A549 (cell line): ENCODE measurements at regions of chr3 and their contacts with region 1.

Region 1: DNA sequence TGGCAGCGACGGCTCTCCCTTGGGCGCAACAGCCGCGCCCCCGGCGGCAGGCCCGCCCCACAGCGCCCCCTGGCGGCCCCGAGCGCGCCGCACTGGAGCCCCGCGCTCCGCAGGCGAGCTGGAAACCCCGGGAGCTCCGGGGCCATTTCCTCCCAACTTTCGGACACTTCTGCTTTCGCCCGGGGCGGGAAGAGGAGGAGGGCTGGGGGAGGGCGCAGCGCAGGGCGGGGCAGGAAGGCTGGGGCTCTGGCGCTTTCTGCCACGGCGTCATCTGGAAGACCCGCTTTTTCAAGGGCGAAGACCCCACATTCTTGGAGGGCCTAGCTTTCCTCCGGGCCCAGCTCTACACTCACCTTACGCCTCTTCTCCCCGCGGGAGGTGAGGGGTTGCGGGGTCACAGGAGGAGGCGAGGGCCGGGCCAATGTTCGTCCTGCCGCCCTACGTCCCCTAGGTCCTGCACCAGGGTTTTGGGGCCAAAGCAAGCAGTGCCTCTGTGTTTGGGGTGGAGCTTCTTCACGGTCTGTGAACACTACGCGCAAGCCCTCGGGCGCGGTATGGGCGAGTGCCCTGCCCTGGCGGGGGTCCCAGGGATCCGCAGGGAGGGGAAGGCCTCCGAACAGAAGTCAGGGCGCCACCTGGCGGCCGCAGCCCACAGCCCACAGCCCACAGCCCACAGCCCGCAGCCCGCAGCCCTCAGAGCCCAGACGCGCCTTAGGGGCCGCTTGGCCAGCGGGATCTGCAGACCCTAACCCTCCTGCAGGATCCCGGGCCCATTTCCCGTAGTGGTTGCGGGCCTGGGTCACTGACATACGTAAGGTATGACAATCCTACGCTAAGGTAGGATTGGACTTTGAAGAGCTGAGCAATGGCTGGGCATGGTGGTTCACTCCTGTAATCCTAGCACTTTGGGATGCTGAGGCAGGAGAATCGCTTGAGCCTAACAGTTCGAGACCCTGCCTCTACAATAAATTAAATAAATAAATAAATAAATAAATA is 31.1 kb downstream of the FOXL2 start:
- DNase-seq: peak; percentile 79 to 82
- ATAC-seq: peak; percentile 94 to 96
- H3K4me3 ChIP-seq: peak overlapping the region; percentile 76
- H3K27ac ChIP-seq: peak overlapping the region; percentile 95 to 97
- H3K4me1 ChIP-seq: peaks cover 5% of the 10 kb centered on the region; the same call in 1 of the 3 replicates
- CTCF ChIP-seq: peak; percentile 70
- EP300 ChIP-seq: no peak
- POLR2A ChIP-seq: peak; percentile 18; the same call in 1 of the 2 replicates
- RAD21 ChIP-seq: peak; percentile 69 to 77

Region 2: DNA sequence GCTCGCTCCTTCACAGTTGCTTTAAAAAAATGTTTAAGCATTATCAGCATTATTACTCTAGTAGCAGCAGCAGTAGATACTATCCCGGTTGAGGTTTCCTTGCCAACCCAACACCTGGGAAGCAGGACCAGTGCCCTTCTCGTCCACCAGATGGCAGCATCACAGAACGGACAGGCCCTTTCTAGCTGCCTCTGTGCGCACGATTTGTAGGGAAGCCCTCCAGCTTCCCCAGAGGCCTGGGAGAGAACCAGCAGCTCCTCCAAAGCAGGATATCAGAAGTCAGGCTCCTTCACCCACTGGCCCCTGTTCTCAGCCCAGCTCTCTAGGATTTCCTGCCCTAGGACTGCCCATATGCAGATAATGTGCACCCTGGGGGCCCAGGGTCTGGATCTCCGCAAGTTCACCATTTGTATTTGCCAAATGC is 498.2 kb before region 1 on chr3:
- CTCF ChIA-PET with region 1: interaction called, 65 read pairs
- POLR2A ChIA-PET with region 1: no interaction called
- DNase-seq: peak; percentile 70 to 79
- ATAC-seq: peak; percentile 97 to 99
- H3K4me3 ChIP-seq: no peak overlapping the region
- H3K27ac ChIP-seq: no peak overlapping the region
- H3K4me1 ChIP-seq: no peaks in the 10 kb centered on the region
- CTCF ChIP-seq: peak; percentile 73
- EP300 ChIP-seq: no peak
- POLR2A ChIP-seq: no peak
- RAD21 ChIP-seq: peak; percentile 77 to 80

Region 3: GRCh38 chr3:138498991-138499390 is 416.8 kb before region 1 on chr3:
- CTCF ChIA-PET with region 1: no interaction called
- POLR2A ChIA-PET with region 1: no interaction called
- DNase-seq: no peak
- ATAC-seq: no peak
- H3K4me3 ChIP-seq: no peak overlapping the region
- H3K27ac ChIP-seq: no peak overlapping the region
- H3K4me1 ChIP-seq: peaks cover 29% of the 10 kb centered on the region
- CTCF ChIP-seq: no peak
- EP300 ChIP-seq: no peak
- POLR2A ChIP-seq: no peak
- RAD21 ChIP-seq: no peak

Region 4: GRCh38 chr3:138668107-138668506 is 247.7 kb before region 1 on chr3:
- CTCF ChIA-PET with region 1: interaction called, 12 read pairs
- POLR2A ChIA-PET with region 1: no interaction called
- DNase-seq: no peak
- ATAC-seq: no peak
- H3K4me3 ChIP-seq: no peak overlapping the region
- H3K27ac ChIP-seq: no peak overlapping the region
- H3K4me1 ChIP-seq: no peaks in the 10 kb centered on the region
- CTCF ChIP-seq: no peak
- EP300 ChIP-seq: no peak
- POLR2A ChIP-seq: no peak
- RAD21 ChIP-seq: no peak

Region 5: GRCh38 chr3:138717348-138717747 is 198.5 kb before region 1 on chr3:
- CTCF ChIA-PET with region 1: interaction called, 12 read pairs
- POLR2A ChIA-PET with region 1: no interaction called
- DNase-seq: no peak
- ATAC-seq: no peak
- H3K4me3 ChIP-seq: no peak overlapping the region
- H3K27ac ChIP-seq: no peak overlapping the region
- H3K4me1 ChIP-seq: no peaks in the 10 kb centered on the region
- CTCF ChIP-seq: no peak
- EP300 ChIP-seq: no peak
- POLR2A ChIP-seq: no peak
- RAD21 ChIP-seq: no peak

Region 6: DNA sequence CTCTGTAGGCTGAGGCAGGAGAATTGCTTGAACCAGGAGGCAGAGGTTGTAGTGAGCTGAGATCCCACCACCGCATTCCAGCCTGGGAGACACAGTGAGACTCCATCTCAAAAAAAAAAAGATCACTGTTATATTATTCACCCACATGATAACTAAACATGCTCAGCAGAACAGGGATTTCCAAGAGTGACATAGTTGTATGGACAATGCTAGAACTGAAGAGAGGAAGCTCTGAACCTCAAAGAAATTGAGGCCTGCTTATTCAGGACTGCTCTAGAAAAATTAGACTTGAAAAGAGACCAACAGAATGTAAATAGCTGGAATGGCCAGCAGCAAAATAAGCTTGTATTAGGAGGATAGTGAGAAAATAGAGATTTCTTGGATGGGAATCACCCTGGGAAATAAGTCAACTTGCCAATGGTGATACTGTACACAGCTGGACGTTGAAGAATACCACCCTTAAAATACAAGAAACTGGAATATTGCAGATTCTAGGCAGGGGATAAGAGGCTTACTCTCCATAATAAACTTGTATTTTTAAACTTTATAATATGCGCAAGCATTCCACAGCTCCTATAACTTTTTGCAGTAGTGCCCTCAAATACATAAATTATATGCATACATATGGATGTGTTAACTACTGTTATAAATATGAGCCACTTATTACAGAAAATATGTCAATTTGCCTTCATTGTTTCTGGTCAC is 109.3 kb before region 1 on chr3:
- CTCF ChIA-PET with region 1: interaction called, 13 read pairs
- POLR2A ChIA-PET with region 1: no interaction called
- DNase-seq: no peak
- ATAC-seq: no peak
- H3K4me3 ChIP-seq: no peak overlapping the region
- H3K27ac ChIP-seq: no peak overlapping the region
- H3K4me1 ChIP-seq: peaks cover 8% of the 10 kb centered on the region
- CTCF ChIP-seq: no peak
- EP300 ChIP-seq: no peak
- POLR2A ChIP-seq: no peak
- RAD21 ChIP-seq: no peak

Region 7: GRCh38 chr3:138862924-138863775 is 52.7 kb before region 1 on chr3:
- CTCF ChIA-PET with region 1: interaction called, 26 read pairs
- POLR2A ChIA-PET with region 1: interaction called, 7 read pairs
- DNase-seq: peak; percentile 86 to 88
- ATAC-seq: peak; percentile 91 to 94
- H3K4me3 ChIP-seq: 0 out of 3 replicates have a peak overlapping the region, but pooled peaks have one; percentile 14
- H3K27ac ChIP-seq: peak overlapping the region; percentile 90 to 93
- H3K4me1 ChIP-seq: peaks cover 33% of the 10 kb centered on the region
- CTCF ChIP-seq: no peak
- EP300 ChIP-seq: no peak
- POLR2A ChIP-seq: peak; percentile 13; the same call in 1 of the 2 replicates
- RAD21 ChIP-seq: 0 out of 5 replicates have a peak, but pooled peaks of 1 of the 2 experiments have one; percentile 37

Region 8: DNA sequence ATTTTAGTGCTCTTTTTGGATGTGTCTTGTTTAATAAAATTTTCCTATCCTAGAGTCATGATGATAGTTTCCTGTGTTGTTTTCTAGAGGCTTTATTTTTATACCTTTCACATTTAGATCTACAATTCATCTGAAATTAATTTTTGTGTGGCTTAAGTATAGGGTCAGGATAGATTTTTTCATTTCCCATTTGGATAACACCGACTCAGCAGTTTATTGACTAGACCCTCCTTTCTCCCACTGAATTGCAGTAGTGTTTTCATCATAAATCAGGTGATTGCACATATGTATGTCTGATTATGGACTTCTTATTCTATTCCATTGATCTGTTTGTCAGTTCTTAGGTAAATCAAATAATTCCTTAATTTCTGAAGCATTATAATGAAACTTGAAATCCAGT is 79.9 kb after region 1 on chr3:
- CTCF ChIA-PET with region 1: no interaction called
- POLR2A ChIA-PET with region 1: no interaction called
- DNase-seq: no peak
- ATAC-seq: no peak
- H3K4me3 ChIP-seq: no peak overlapping the region
- H3K27ac ChIP-seq: no peak overlapping the region
- H3K4me1 ChIP-seq: no peaks in the 10 kb centered on the region
- CTCF ChIP-seq: no peak
- EP300 ChIP-seq: no peak
- POLR2A ChIP-seq: no peak
- RAD21 ChIP-seq: no peak

Region 9: DNA sequence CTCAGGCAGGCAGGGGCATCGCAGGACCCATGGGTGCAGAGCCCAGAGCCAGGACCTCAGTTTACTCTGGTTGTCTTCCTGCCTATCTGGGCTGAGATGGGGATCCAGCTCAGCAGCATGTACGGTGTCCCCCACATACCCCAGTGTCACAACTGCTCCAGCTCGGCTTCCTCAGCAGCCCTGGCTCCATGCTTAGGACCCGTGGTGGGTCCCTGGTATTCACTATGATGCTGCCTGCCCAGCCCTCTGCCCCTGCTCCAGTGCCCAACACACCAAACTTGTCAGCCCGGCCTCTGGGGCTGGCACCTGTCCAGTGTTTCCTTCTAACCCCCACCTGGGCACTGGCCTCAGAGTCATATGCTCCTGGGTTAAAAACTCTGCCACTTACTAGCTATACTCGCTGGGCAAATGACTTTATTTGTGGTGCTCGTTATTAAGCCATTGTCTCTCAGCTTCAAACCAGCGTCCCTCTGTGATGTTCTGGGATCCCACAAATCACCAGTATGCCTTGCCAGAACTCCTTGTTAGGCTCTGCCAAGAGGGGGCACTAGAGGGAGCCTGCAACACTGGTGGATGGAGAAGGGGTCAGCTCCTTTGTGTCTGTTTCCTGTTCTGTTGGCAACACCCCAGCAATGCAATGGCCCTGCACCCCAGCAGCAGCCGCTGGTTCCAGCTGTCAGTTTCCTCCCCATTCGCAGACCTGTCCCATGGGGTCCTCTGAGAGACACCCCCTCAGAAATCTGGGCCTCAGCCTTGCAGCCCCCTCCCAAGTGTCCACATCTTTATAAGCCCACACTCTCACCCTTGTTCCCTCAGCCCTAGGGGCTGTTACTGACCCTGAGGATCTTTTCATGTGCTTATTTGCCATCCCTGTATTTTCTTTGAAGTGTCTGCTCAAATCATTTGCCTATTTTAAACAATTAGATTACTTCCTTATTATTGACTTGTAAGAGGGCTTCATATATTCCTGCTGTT is 403.9 kb after region 1 on chr3:
- CTCF ChIA-PET with region 1: no interaction called
- POLR2A ChIA-PET with region 1: no interaction called
- DNase-seq: peak in 1 of 2 experiments; percentile 24
- ATAC-seq: peak; percentile 26 to 69; a peak in 3 of 6 replicates
- H3K4me3 ChIP-seq: no peak overlapping the region
- H3K27ac ChIP-seq: peak overlapping the region in 1 of 2 experiments; percentile 64; a peak in 2 of 6 replicates
- H3K4me1 ChIP-seq: peaks cover 17% of the 10 kb centered on the region
- CTCF ChIP-seq: no peak
- EP300 ChIP-seq: no peak
- POLR2A ChIP-seq: no peak
- RAD21 ChIP-seq: no peak